CD8-positive, alpha-beta T cell (primary cell): ENCODE measurements at regions of chr2 and their contacts with region 1.

Region 1: DNA sequence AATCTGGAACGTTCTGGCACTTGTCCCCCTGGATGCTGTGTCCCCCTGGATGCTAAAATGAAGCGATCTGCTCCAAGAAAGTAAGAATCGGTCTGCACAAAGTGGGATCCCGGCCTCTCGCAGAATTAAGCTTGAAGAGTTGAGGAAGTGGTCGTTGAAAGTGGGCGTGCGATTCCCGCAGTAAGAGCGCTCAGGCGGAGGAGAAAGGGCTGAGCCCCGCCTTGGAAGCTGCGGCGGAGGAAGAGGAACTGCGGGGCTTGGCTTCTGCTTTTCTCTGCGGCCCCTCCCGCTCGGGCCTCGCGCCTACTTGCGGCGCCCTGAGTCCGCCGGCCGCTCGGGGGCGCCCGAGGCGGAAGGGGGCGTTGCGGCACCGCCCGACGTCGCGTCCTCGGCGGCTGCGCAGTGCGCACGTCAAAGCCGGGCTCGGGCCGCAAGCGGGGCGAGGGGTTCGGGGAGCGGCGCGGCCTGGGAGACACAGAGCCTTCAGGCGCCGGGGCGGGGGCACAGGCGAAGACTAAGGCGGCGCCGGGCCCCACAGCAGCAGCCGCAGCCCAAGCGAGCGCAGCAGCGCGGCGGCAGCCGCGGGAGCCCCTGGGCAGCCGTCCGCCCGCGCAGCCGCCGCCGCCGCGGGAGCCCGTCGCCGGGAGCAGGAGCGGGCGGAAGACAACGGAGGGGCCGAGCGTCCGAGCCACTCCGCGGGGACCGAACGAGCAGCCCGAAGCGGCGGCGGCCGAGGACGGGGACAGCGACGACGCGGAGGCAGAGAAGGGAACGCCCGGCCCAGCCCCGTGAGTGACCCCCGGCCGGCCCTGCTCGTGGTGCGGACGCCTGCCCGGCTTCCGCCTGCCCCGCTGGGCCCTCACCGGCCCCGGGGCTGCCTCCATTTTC is at the start of gene CAB39:
- DNase-seq: peak; percentile 76 to 95 (median 86)
- ATAC-seq: peak; percentile 87
- H3K4me3 ChIP-seq: peak within 1 kb of the TSS; percentile 76 to 79
- H3K4me3 Mint-ChIP-seq: peak within 1 kb of the TSS; percentile 95
- H3K27ac ChIP-seq: peak within 1 kb of the TSS; percentile 65 to 79
- H3K27ac Mint-ChIP-seq: peak within 1 kb of the TSS; percentile 97
- H3K4me1 ChIP-seq: peaks cover 30% of the 10 kb centered on the region
- H3K4me1 Mint-ChIP-seq: peaks cover 44% of the 10 kb centered on the region
- H3K27me3 ChIP-seq: no peaks in the 10 kb centered on the region
- H3K27me3 Mint-ChIP-seq: no peaks in the 10 kb centered on the region
- CTCF ChIP-seq: peak; percentile 76
- total RNA-seq, gene CAB39: 36.4 to 42.6 TPM

Region 2: DNA sequence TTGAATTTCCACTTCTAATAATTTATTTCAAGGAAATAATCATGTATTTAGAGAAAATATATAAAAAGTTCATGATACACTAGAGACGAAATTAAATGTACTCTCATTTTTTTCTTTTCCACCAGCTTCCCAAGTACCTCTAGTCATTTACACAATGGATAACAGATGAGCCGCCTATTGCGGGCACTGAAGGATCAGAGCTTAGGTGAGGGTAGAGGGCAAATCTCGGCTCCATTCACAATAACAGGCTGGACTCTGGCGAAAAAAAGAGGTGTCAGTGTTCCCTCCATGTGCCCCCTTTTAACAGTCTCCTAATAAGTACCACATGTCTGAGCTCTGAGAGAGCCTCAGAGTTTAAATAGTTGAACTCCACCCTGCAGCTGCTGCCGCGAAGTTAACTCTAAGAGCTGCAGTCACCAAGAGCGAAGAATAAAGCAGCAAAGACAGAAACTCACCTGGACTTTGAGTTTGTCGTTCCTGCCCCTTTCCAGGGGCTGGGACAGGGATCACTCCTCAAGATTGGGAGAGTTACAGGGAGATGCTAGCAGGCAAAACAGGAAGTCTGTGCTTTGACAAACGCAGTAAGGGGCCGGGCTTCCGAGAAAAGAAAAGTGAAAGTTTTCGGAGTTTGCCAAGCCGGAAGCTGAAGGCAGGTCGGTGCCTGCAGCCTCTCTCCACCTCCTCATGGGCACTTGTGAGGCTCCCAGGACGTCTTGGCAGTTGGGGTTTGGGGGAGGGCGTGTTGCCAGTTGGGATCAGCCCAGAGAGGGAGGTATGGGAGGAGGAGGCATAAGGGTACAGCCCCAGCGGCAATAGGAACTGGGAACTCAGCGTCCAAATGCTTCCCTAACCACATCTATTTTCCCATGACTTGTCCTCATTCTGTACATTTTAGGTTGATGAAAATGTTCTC is 493.0 kb before region 1 on chr2 and contains the start of gene SP110:
- CTCF ChIA-PET with region 1: no interaction called
- POLR2A ChIA-PET with region 1: no interaction called
- intact Hi-C with region 1: loop called in 1 of 2 experiments (anchors 5 kb)
- DNase-seq: peak; percentile 52 to 89 (median 78)
- ATAC-seq: peak; percentile 93
- H3K4me3 ChIP-seq: peak within 1 kb of the TSS; percentile 90 to 96
- H3K4me3 Mint-ChIP-seq: peak within 1 kb of the TSS; percentile 98
- H3K27ac ChIP-seq: peak within 1 kb of the TSS; percentile 82 to 88
- H3K27ac Mint-ChIP-seq: peak within 1 kb of the TSS; percentile 99
- H3K4me1 ChIP-seq: peaks cover 36% of the 10 kb centered on the region
- H3K4me1 Mint-ChIP-seq: peaks cover 60% of the 10 kb centered on the region
- H3K27me3 ChIP-seq: no peaks in the 10 kb centered on the region
- H3K27me3 Mint-ChIP-seq: no peaks in the 10 kb centered on the region
- CTCF ChIP-seq: no peak
- total RNA-seq, gene SP110: 50.6 to 58.1 TPM

Region 3: GRCh38 chr2:230411570-230412370 is 300.9 kb before region 1 on chr2:
- CTCF ChIA-PET with region 1: no interaction called
- POLR2A ChIA-PET with region 1: interaction called, 3 read pairs
- intact Hi-C with region 1: loop called (anchors 5 kb)
- DNase-seq: peak in 8 of 9 experiments; percentile 37 to 83 (median 59)
- ATAC-seq: peak; percentile 67
- H3K4me3 ChIP-seq: peak overlapping the region; percentile 88 to 92
- H3K4me3 Mint-ChIP-seq: peak overlapping the region; percentile 100
- H3K27ac ChIP-seq: peak overlapping the region; percentile 83 to 92
- H3K27ac Mint-ChIP-seq: peak overlapping the region; percentile 100
- H3K4me1 ChIP-seq: peaks cover 53% of the 10 kb centered on the region
- H3K4me1 Mint-ChIP-seq: peaks cover 81% of the 10 kb centered on the region
- H3K27me3 ChIP-seq: no peaks in the 10 kb centered on the region
- H3K27me3 Mint-ChIP-seq: no peaks in the 10 kb centered on the region
- CTCF ChIP-seq: no peak

Region 4: DNA sequence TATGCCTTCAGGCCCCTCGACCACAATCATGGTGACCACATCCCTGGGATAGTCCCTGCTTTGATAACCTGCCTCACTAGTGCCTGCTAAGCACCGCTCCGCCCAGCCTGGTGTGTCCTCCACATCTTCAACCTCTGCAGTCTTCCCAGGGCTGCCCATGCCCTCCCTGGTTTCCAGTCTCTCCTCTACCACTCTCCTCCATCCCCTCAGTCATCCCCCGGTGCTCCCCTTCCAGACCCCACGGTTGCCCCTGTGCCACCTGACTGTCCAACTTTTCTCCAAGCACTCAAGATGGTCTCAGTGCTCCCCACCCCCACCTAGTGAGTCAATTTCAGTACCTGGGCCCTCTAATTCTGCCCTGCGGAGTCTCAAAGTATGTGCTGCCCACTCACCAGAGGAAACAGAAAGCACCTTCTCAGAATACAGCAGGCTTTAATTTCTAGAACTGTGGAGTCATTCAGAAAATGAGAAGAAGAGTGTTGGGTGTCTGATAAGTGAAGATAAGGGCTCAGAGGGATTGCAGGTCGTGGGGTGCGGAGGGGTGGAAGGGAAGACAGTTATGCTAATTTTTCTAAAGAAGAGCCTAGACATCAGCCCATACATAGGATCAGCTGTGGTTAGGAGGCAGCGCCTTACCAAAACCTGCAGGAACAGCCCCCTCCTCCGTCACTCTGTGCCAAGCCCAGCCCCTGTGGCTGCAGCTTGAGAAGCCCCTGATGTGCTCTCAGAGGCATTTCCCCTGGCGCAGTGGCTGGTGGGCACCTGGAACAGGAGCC is 53.6 kb before region 1 on chr2:
- CTCF ChIA-PET with region 1: interaction called, 3 read pairs
- POLR2A ChIA-PET with region 1: interaction called, 3 read pairs
- intact Hi-C with region 1: loop called (anchors 2 to 5 kb)
- DNase-seq: peak in 5 of 9 experiments; percentile 20 to 66 (median 47)
- ATAC-seq: peak; percentile 47
- H3K4me3 ChIP-seq: peak overlapping the region in 1 of 2 experiments; percentile 23
- H3K4me3 Mint-ChIP-seq: peak overlapping the region; percentile 56
- H3K27ac ChIP-seq: peak overlapping the region in 1 of 2 experiments; percentile 55
- H3K27ac Mint-ChIP-seq: peak overlapping the region; percentile 91
- H3K4me1 ChIP-seq: peaks cover 78% of the 10 kb centered on the region
- H3K4me1 Mint-ChIP-seq: peaks cover 84% of the 10 kb centered on the region
- H3K27me3 ChIP-seq: no peaks in the 10 kb centered on the region
- H3K27me3 Mint-ChIP-seq: no peaks in the 10 kb centered on the region
- CTCF ChIP-seq: no peak

Region 5: GRCh38 chr2:230781130-230781797 is 68.6 kb after region 1 on chr2:
- CTCF ChIA-PET with region 1: interaction called, 4 read pairs
- POLR2A ChIA-PET with region 1: interaction called, 11 read pairs
- intact Hi-C with region 1: no loop called
- DNase-seq: peak in 8 of 9 experiments; percentile 7 to 86 (median 56)
- ATAC-seq: peak; percentile 96
- H3K4me3 ChIP-seq: no peak overlapping the region
- H3K4me3 Mint-ChIP-seq: peak overlapping the region; percentile 13
- H3K27ac ChIP-seq: peak overlapping the region in 1 of 2 experiments; percentile 34
- H3K27ac Mint-ChIP-seq: peak overlapping the region; percentile 84
- H3K4me1 ChIP-seq: peaks cover 42% of the 10 kb centered on the region
- H3K4me1 Mint-ChIP-seq: peaks cover 79% of the 10 kb centered on the region
- H3K27me3 ChIP-seq: no peaks in the 10 kb centered on the region
- H3K27me3 Mint-ChIP-seq: no peaks in the 10 kb centered on the region
- CTCF ChIP-seq: no peak

Region 6: GRCh38 chr2:231056453-231057424 is 344.1 kb after region 1 on chr2 and contains the start of gene PSMD1:
- CTCF ChIA-PET with region 1: no interaction called
- POLR2A ChIA-PET with region 1: no interaction called
- intact Hi-C with region 1: loop called in 1 of 2 experiments (anchors 2 kb)
- DNase-seq: peak; percentile 90 to 97 (median 93)
- ATAC-seq: peak; percentile 85
- H3K4me3 ChIP-seq: peak within 1 kb of the TSS; percentile 83 to 87
- H3K4me3 Mint-ChIP-seq: peak within 1 kb of the TSS; percentile 99
- H3K27ac ChIP-seq: peak within 1 kb of the TSS; percentile 70 to 84
- H3K27ac Mint-ChIP-seq: peak within 1 kb of the TSS; percentile 100
- H3K4me1 ChIP-seq: peaks cover 29% of the 10 kb centered on the region
- H3K4me1 Mint-ChIP-seq: peaks cover 55% of the 10 kb centered on the region
- H3K27me3 ChIP-seq: no peaks in the 10 kb centered on the region
- H3K27me3 Mint-ChIP-seq: peaks cover 8% of the 10 kb centered on the region
- CTCF ChIP-seq: peak; percentile 93
- total RNA-seq, gene PSMD1: 31.0 to 33.9 TPM

Region 7: DNA sequence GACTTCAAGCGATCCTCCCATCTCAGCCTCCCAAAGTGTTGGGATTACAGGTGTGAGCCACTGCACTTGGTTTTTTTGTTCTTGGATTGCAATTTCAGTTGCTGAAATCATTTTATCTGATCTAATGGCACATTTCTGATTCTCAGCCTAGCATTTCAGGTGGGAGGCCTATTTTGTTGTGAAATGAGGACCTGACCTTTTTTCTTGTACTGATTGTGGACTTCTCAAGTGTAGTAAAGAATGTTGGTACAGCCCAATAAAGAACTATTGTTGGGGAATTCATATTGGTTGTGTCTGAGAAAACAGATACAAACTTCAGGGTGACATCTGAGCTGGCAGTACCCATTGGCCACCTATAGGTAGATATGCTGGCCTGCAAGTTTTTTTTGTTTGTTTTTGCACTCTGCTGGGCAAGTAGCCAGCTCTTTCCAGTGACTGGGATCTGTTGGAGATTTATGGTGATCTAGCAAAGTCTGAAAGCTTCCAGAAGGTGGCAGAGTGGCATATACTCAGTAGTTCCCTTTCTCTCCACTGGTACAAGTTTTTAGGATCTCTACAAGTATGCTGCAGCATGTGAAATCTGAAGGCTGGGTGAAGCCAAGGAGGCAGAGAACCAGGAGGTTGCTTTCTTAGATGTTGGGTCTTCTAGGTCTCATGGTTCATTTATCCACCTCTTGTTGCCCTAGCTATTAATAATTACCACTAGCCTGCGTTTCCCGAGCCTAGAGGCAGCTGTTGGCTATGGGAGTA is 1082.8 kb after region 1 on chr2:
- CTCF ChIA-PET with region 1: no interaction called
- POLR2A ChIA-PET with region 1: no interaction called
- intact Hi-C with region 1: no loop called
- DNase-seq: no peak
- ATAC-seq: no peak
- H3K4me3 ChIP-seq: no peak overlapping the region
- H3K4me3 Mint-ChIP-seq: no peak overlapping the region
- H3K27ac ChIP-seq: no peak overlapping the region
- H3K27ac Mint-ChIP-seq: no peak overlapping the region
- H3K4me1 ChIP-seq: no peaks in the 10 kb centered on the region
- H3K4me1 Mint-ChIP-seq: peaks cover 23% of the 10 kb centered on the region
- H3K27me3 ChIP-seq: no peaks in the 10 kb centered on the region
- H3K27me3 Mint-ChIP-seq: no peaks in the 10 kb centered on the region
- CTCF ChIP-seq: no peak